ENCODE measurements at regions of chr12 and their contacts with region 1.

Region 1: GRCh38 chr12:62291864-62292760 is 31.9 kb downstream of the USP15 start:
- DNase-seq: peak; percentile 30 to 51
- ATAC-seq: peak; percentile 46
- H3K4me3 ChIP-seq: no peak overlapping the region
- H3K27ac ChIP-seq: no peak overlapping the region
- H3K4me1 ChIP-seq: peaks cover 0 to 2% of the 10 kb centered on the region in 2 donors
- H3K27me3 ChIP-seq: no peaks in the 10 kb centered on the region

Region 2: GRCh38 chr12:62379026-62379722 is 87.1 kb after region 1 on chr12:
- intact Hi-C with region 1: loop called in 1 of 2 experiments (anchors 10 kb)
- DNase-seq: no peak
- ATAC-seq: no peak
- H3K4me3 ChIP-seq: no peak overlapping the region
- H3K27ac ChIP-seq: no peak overlapping the region
- H3K4me1 ChIP-seq: no peaks in the 10 kb centered on the region
- H3K27me3 ChIP-seq: no peaks in the 10 kb centered on the region